Calu3 (cell line): ENCODE measurements at regions of chr5 and their contacts with region 1.

Region 1: DNA sequence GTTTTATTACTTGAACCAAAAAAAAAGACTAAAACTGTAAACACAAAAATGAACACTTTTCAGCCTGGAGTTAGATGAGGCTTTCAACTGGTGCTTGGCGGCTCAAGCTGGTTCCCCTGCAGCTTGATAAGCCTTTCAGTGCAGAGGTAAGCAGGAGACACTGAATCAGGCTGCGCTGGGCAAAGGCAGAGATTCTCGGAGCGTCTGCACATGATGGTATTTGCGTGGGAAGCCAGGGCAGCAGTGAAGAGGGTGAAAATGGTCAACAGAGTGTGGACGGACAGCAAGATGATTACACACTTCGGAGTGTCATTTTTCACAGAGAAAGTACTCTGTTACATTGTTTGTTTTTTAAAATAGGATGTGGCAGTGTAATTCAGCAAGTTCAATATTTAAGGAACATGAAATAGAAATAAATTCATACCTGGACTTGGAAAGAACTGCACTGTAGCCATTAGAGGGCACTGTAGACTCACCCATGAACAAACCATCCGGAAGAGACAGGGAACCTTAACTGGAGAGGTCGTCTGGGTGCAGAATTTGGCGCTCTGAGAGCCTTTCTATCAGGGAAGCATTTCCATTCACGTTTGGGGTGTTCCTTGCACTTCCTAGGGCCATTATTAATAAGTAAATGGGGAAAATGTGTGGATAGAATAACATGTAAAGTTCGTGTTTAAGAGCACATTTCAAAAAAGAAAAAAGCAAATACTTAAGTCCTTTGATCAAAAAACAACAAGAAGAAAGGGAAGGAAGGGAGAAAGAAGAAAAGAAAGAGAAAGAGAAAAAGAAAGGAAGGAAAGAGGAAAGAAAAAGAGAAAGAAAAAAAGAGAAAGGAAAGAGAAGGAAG is 69.8 kb downstream of the ICE1 start:
- DNase-seq: peak; percentile 46
- H3K4me3 Mint-ChIP-seq: no peak overlapping the region
- H3K27ac Mint-ChIP-seq: no peak overlapping the region
- H3K4me1 Mint-ChIP-seq: peaks cover 7% of the 10 kb centered on the region
- H3K27me3 Mint-ChIP-seq: no peaks in the 10 kb centered on the region
- CTCF ChIP-seq: peak; percentile 43

Region 2: GRCh38 chr5:4817767-4818166 is 674.5 kb before region 1 on chr5:
- CTCF ChIA-PET with region 1: no interaction called
- intact Hi-C with region 1: no loop called
- DNase-seq: no peak
- H3K4me3 Mint-ChIP-seq: no peak overlapping the region
- H3K27ac Mint-ChIP-seq: no peak overlapping the region
- H3K4me1 Mint-ChIP-seq: no peaks in the 10 kb centered on the region
- H3K27me3 Mint-ChIP-seq: no peaks in the 10 kb centered on the region
- CTCF ChIP-seq: no peak

Region 3: DNA sequence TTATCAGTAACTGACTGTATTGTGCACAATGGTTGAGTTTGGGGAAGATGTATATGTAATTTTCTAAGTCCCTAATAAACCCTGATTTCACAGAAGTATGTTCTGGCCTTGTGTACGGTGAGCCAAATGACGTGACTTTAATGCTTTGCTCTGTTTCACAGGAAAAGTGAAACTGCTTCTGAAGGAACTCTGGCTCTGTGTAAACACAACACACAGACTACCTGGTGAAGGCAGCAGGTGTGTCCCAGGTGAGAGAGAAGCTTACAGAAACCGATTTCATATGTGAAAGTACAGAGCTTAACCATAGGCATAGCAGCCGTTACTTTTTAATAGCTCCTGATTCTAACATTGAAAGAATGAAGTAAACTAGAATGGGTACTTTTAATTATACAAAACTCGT is 37.9 kb before region 1 on chr5:
- CTCF ChIA-PET with region 1: no interaction called
- intact Hi-C with region 1: no loop called
- DNase-seq: no peak
- H3K4me3 Mint-ChIP-seq: no peak overlapping the region
- H3K27ac Mint-ChIP-seq: no peak overlapping the region
- H3K4me1 Mint-ChIP-seq: no peaks in the 10 kb centered on the region
- H3K27me3 Mint-ChIP-seq: no peaks in the 10 kb centered on the region
- CTCF ChIP-seq: no peak

Region 4: GRCh38 chr5:5886812-5887486 is 394.6 kb after region 1 on chr5:
- CTCF ChIA-PET with region 1: no interaction called
- intact Hi-C with region 1: loop called (anchors 10 kb)
- DNase-seq: peak; percentile 56
- H3K4me3 Mint-ChIP-seq: no peak overlapping the region
- H3K27ac Mint-ChIP-seq: no peak overlapping the region
- H3K4me1 Mint-ChIP-seq: no peaks in the 10 kb centered on the region
- H3K27me3 Mint-ChIP-seq: no peaks in the 10 kb centered on the region
- CTCF ChIP-seq: peak; percentile 31

Region 5: GRCh38 chr5:6745706-6746222 is 1253.5 kb after region 1 on chr5:
- CTCF ChIA-PET with region 1: no interaction called
- intact Hi-C with region 1: loop called (anchors 10 kb)
- DNase-seq: peak; percentile 36
- H3K4me3 Mint-ChIP-seq: no peak overlapping the region
- H3K27ac Mint-ChIP-seq: no peak overlapping the region
- H3K4me1 Mint-ChIP-seq: no peaks in the 10 kb centered on the region
- H3K27me3 Mint-ChIP-seq: no peaks in the 10 kb centered on the region
- CTCF ChIP-seq: peak; percentile 49